ENCODE measurements at regions of chr6 and their contacts with region 1.

Region 1: GRCh38 chr6:107489636-107490565 is at the start of gene SOBP:
- DNase-seq: peak; percentile 53 to 81
- H3K4me3 ChIP-seq: peak within 1 kb of the TSS; percentile 76 to 89
- H3K27ac ChIP-seq: peak within 1 kb of the TSS; percentile 83 to 92
- H3K4me1 ChIP-seq: peaks cover 0 to 37% (median 22%) of the 10 kb centered on the region in 4 donors
- H3K27me3 ChIP-seq: no peaks in the 10 kb centered on the region
- CTCF ChIP-seq: peak; percentile 17 to 24

Region 2: GRCh38 chr6:107540465-107540857 is 50.6 kb after region 1 on chr6:
- intact Hi-C with region 1: loop called (anchors 5 kb)
- DNase-seq: no peak
- H3K4me3 ChIP-seq: no peak overlapping the region
- H3K27ac ChIP-seq: peak overlapping the region in 1 of 2 donors; percentile 12
- H3K4me1 ChIP-seq: peaks cover 0 to 72% (median 16%) of the 10 kb centered on the region in 4 donors
- H3K27me3 ChIP-seq: no peaks in the 10 kb centered on the region
- CTCF ChIP-seq: no peak

Region 3: GRCh38 chr6:107560657-107561056 is 70.8 kb after region 1 on chr6:
- intact Hi-C with region 1: loop called (anchors 5 kb)
- DNase-seq: no peak
- H3K4me3 ChIP-seq: peak overlapping the region in 1 of 2 donors; percentile 2
- H3K27ac ChIP-seq: peak overlapping the region; percentile 77 to 79
- H3K4me1 ChIP-seq: peaks cover 0 to 40% (median 17%) of the 10 kb centered on the region in 4 donors
- H3K27me3 ChIP-seq: no peaks in the 10 kb centered on the region
- CTCF ChIP-seq: no peak

Region 4: DNA sequence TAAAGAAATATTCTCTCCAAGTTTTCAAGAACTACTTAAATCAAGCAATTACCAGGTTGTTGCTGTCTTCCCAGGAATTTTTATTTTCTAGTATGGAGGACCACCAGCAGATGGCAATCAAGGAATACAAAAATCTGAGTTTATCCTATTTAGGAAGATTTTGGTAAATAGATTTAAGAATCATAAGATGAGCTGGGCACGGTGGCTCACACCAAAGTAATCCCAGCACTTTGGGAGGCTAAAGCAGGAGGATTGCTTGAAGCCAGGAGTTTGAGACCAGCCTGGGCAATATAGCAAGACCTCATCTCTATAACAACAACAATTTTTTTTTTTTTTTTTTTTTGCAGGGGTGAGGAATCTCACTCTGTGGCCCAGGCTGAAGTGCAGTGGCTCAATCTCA is 487.4 kb after region 1 on chr6:
- intact Hi-C with region 1: no loop called
- DNase-seq: no peak
- H3K4me3 ChIP-seq: no peak overlapping the region
- H3K27ac ChIP-seq: no peak overlapping the region
- H3K4me1 ChIP-seq: no peaks in the 10 kb centered on the region
- H3K27me3 ChIP-seq: no peaks in the 10 kb centered on the region
- CTCF ChIP-seq: peak; percentile 16 to 32

Measured in tibial artery (tissue), 4 donors.